ENCODE measurements at regions of chr10 and their contacts with region 1.

Region 1: DNA sequence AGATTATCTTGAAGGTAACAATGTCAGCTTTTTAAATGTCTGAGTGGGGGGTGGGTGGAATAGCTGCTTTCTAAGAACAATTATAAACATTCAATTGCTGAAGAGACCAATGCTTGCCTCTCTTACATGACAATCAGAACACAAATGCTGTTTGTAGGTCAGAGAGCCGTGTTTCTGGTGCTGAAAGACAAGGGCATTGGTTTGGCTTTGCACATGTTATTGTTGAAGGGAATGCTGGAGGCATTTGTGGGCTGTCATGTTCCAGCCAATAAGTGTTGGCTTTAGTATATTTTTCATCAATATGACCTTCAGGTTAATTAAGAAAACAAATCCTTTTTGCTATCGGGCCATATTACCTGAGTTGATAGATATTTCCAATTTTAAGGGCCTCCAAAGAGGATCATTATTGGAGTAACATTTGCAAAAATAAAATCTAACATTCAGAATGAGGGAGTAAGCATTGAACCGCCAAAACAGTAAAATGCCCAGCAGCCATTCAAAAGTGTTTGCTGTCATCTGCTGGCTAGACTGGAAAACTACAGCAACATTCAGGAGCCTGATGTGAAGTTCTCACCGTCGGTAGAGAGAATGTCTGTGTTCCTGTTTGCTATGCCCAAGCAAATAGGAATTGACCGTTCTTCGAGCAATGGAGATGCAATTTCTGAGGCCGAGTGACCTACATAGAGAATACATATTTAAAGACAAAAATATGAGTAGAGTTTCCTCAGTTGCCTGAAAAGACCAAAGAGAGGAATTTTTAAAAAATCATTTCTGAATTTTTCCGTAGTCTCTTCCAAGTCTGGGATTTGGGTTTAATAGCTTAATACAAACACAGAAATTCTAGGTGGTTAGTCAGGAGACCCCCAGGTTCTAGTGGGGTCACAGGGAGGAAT is 118.9 kb downstream of the APBB1IP start:
- DNase-seq: no peak
- ATAC-seq: peak in 1 of 2 donors; percentile 56
- H3K4me3 ChIP-seq: no peak overlapping the region
- H3K27ac ChIP-seq: no peak overlapping the region
- H3K4me1 ChIP-seq: no peaks in the 10 kb centered on the region
- H3K27me3 ChIP-seq: no peaks in the 10 kb centered on the region
- CTCF ChIP-seq: peak in 4 of 5 experiments; percentile 13 to 38 (median 26)
- POLR2A ChIP-seq: no peak

Region 2: GRCh38 chr10:26334932-26335573 is 221.9 kb before region 1 on chr10:
- in situ Hi-C with region 1: loop called in 2 of 4 experiments (anchors 10 kb)
- intact Hi-C with region 1: loop called (anchors 2 kb)
- DNase-seq: no peak
- ATAC-seq: no peak
- H3K4me3 ChIP-seq: no peak overlapping the region
- H3K27ac ChIP-seq: no peak overlapping the region
- H3K4me1 ChIP-seq: no peaks in the 10 kb centered on the region
- H3K27me3 ChIP-seq: no peaks in the 10 kb centered on the region
- CTCF ChIP-seq: peak in 3 of 5 experiments; percentile 5 to 37 (median 13)
- POLR2A ChIP-seq: no peak